Activated CD4-positive, alpha-beta memory T cell treated with anti-CD3 and anti-CD28 coated beads, Interleukin-2, amount 10 ng/mL, durations not matched to agents 7 days and 5 days (primary cell): ENCODE measurements at regions of chr1 and their contacts with region 1.

Region 1: GRCh38 chr1:51296383-51297357 is 33.7 kb downstream of the TTC39A start:
- DNase-seq: peak; percentile 79
- H3K4me3 Mint-ChIP-seq: peak overlapping the region; percentile 58
- H3K27ac Mint-ChIP-seq: no peak overlapping the region
- H3K4me1 Mint-ChIP-seq: peaks cover 44% of the 10 kb centered on the region
- H3K27me3 Mint-ChIP-seq: no peaks in the 10 kb centered on the region

Region 2: DNA sequence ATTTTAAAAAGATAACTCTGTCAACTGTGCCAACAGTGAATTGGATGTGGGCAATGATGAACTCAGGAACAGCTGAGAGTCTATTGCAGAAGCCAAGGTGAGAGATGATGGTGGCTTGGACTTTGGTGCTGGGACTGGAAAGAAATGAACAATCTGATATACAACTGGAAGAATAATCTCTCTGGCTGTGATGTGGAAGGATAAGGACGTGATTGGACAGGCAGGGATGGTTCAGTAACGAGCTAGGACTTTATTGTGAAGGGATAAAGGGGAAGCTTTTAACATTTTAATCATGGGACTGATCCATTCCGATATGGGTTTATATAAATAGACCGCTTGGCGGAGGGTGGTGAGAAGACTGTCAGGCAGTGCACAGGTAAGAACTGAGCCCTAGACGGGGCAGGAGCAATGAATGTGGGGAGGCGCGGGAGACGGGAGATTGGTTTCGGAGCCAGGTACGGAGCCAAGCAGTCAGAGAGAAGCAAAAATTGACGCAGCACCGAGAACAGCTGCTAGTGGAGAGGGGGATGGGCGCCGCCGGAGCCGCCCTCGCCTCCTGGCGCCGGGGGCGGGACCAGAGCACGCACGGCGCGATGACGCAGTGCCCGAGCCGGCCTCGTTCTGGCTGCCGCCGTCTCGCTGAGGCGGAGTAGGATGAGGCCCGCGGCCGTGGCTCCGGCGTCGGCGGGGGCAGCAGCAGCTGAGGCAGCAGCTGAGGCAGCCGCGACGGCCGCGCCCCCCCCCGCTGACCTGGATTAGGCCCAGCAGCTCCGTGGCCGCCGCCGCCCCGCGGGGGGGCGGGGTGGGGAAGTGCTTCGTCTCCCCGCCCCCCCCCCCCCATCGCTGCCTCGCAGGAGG is 60.8 kb before region 1 on chr1 and contains the start of gene RNF11:
- CTCF ChIA-PET with region 1: interaction called, 11 read pairs
- POLR2A ChIA-PET with region 1: interaction called, 10 read pairs
- DNase-seq: peak; percentile 93
- H3K4me3 Mint-ChIP-seq: peak within 1 kb of the TSS; percentile 97
- H3K27ac Mint-ChIP-seq: peak within 1 kb of the TSS; percentile 87
- H3K4me1 Mint-ChIP-seq: peaks cover 31% of the 10 kb centered on the region
- H3K27me3 Mint-ChIP-seq: no peaks in the 10 kb centered on the region
- total RNA-seq, gene RNF11: 34.8 to 39.7 TPM

Region 3: GRCh38 chr1:51255331-51255730 is 41.3 kb before region 1 on chr1:
- CTCF ChIA-PET with region 1: interaction called, 10 read pairs
- POLR2A ChIA-PET with region 1: no interaction called
- DNase-seq: no peak
- H3K4me3 Mint-ChIP-seq: no peak overlapping the region
- H3K27ac Mint-ChIP-seq: no peak overlapping the region
- H3K4me1 Mint-ChIP-seq: peaks cover 11% of the 10 kb centered on the region
- H3K27me3 Mint-ChIP-seq: no peaks in the 10 kb centered on the region

Region 4: GRCh38 chr1:51268634-51269033 is 28.0 kb before region 1 on chr1:
- CTCF ChIA-PET with region 1: interaction called, 17 read pairs
- POLR2A ChIA-PET with region 1: interaction called, 4 read pairs
- DNase-seq: no peak
- H3K4me3 Mint-ChIP-seq: no peak overlapping the region
- H3K27ac Mint-ChIP-seq: peak overlapping the region; percentile 38
- H3K4me1 Mint-ChIP-seq: peaks cover 49% of the 10 kb centered on the region
- H3K27me3 Mint-ChIP-seq: no peaks in the 10 kb centered on the region

Region 5: DNA sequence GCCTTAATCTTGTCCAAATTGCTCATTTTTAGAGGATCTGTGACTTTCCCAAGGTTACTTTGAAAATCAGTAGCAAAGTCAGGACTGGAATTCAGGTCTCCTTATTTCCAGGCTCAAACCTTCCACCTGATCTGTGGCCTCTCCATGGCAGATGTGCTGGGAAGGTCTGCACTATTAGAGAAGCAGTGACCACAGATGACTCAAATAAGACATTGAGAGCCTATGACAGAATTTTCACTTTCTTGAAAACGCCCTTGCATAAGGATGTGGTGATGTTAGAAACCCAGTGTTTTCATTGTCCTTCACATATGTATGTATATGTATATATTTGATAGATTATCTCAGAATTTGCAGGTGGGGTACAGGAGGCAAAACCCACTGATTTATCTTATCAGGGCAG is 11.6 kb before region 1 on chr1:
- CTCF ChIA-PET with region 1: interaction called, 17 read pairs
- POLR2A ChIA-PET with region 1: interaction called, 3 read pairs
- DNase-seq: no peak
- H3K4me3 Mint-ChIP-seq: no peak overlapping the region
- H3K27ac Mint-ChIP-seq: no peak overlapping the region
- H3K4me1 Mint-ChIP-seq: peaks cover 33% of the 10 kb centered on the region
- H3K27me3 Mint-ChIP-seq: peaks cover 13% of the 10 kb centered on the region

Region 6: DNA sequence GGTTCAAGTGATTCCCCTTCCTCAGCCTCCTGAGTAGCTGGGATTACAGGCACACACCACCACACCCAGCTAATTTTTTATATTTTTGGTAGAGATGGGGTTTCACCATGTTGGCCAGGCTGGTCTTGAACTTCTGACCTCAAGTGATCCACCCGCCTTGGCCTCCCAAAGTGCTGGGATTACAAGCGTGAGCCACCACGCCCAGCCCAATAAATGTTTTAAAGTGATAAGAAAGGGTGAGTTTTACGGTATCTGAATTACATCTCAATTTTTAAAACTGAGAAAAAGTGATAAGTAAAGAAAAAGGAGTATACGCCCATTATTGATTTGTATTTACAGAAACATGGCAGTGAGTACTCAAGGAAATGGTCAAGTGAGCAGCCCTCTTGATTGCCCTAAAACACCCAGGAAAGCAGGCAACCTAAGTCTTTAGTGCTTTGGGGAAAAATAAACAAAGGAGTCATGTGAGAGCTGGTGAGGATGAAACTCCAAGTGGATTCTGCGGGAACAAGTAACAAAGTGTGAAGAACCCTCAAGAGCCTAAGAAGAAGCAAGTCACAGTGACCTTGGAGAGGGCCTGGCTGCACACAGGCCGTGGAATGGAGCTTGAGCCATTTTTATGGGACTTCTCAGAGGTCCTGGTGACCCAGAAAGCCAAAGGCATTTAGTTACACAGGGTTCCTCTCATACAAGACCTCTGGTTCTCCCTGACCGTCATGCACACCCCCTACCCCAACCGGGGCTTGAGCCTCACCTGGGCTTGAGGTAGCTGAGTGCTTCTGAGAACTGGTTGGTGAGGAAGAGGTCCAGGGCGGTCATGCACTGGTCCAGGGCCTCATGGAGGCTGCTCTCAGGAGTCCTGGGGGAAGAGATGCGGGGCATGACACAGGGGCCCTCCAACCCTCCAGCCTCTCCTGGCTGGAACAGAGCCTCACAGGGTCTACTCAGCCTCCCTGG is 24.6 kb after region 1 on chr1:
- CTCF ChIA-PET with region 1: no interaction called
- POLR2A ChIA-PET with region 1: no interaction called
- DNase-seq: no peak
- H3K4me3 Mint-ChIP-seq: no peak overlapping the region
- H3K27ac Mint-ChIP-seq: no peak overlapping the region
- H3K4me1 Mint-ChIP-seq: no peaks in the 10 kb centered on the region
- H3K27me3 Mint-ChIP-seq: peaks cover 15% of the 10 kb centered on the region